Heart right ventricle (tissue), 16 donors: ENCODE measurements at regions of chr19 and their contacts with region 1.

Region 1: DNA sequence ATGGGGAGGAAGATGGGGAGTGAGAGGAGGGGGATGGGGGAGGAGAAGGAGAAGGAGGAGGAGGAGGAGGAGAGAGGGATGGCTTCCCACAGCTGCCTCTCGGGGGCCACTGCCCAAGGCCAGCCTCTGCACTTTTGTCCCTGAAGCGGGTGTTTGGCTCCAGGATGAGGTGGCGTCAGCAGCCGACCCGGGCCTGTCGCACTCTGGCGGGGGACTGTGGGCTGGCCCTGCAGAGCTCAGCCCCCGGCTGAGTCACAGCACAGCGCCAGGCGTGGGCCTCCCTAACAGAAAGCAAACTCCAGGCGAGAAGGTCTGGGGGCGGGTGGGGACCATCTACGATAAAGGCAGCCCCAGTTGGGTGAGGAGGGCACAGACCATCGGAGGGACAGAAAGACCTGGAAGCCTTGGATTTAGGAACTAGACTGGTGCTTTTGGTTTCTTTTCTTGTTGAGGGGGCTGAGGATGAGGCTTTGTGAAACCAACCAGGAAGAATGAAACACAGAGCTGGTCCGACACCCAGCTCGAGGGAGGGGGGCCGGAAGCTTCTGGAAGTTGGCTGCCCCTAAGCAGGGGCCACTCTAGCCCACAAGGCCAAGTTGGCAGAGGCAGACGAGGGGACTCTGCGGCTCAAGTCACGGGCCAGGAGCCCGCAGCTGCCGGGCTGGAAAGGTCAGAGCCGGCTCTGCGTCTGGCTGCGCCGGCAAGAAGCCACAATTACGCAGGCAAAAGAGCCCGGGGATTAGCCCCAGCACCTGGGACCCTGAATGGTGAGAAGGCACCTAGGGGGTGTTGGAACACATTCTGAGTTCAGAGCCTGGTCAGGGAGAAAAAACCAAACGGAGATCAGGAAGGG is 18.2 kb downstream of the LSM4 start:
- DNase-seq: peak; percentile 89
- ATAC-seq: peak; percentile 83 to 91 (median 87)
- H3K4me3 ChIP-seq: peak overlapping the region; percentile 6 to 59 (median 47)
- H3K27ac ChIP-seq: peak overlapping the region; percentile 90 to 100 (median 98)
- H3K4me1 ChIP-seq: peaks cover 24 to 74% (median 60%) of the 10 kb centered on the region in 9 donors
- H3K27me3 ChIP-seq: no peaks in the 10 kb centered on the region
- CTCF ChIP-seq: peak in 2 of 9 donors; percentile 26 to 28

Region 2: GRCh38 chr19:18233224-18233825 is 71.4 kb before region 1 on chr19:
- intact Hi-C with region 1: no loop called
- DNase-seq: peak in 1 of 2 donors; percentile 50
- ATAC-seq: peak in 6 of 8 donors; percentile 29 to 60 (median 48)
- H3K4me3 ChIP-seq: no peak overlapping the region
- H3K27ac ChIP-seq: no peak overlapping the region
- H3K4me1 ChIP-seq: peaks cover 0 to 17% (median 5%) of the 10 kb centered on the region in 9 donors
- H3K27me3 ChIP-seq: peaks cover 4 to 67% (median 64%) of the 10 kb centered on the region in 7 donors
- CTCF ChIP-seq: no peak

Region 3: GRCh38 chr19:18291590-18292461 is 12.9 kb before region 1 on chr19:
- intact Hi-C with region 1: loop called in 1 of 10 experiments (anchors 1 kb)
- DNase-seq: peak; percentile 87 to 93
- ATAC-seq: peak; percentile 80 to 86 (median 84)
- H3K4me3 ChIP-seq: peak overlapping the region; percentile 62 to 89 (median 76)
- H3K27ac ChIP-seq: peak overlapping the region; percentile 94 to 100 (median 99)
- H3K4me1 ChIP-seq: peaks cover 3 to 48% (median 26%) of the 10 kb centered on the region in 9 donors
- H3K27me3 ChIP-seq: no peaks in the 10 kb centered on the region
- CTCF ChIP-seq: no peak

Region 4: GRCh38 chr19:18322759-18323460 is 18.2 kb after region 1 on chr19 and contains the start of gene LSM4:
- intact Hi-C with region 1: loop called in 4 of 10 experiments (anchors 2 kb)
- DNase-seq: peak; percentile 98
- ATAC-seq: peak; percentile 96 to 98 (median 97)
- H3K4me3 ChIP-seq: peak within 1 kb of the TSS; percentile 58 to 92 (median 78)
- H3K27ac ChIP-seq: peak within 1 kb of the TSS; percentile 63 to 98 (median 92)
- H3K4me1 ChIP-seq: peaks cover 0 to 62% (median 57%) of the 10 kb centered on the region in 9 donors
- H3K27me3 ChIP-seq: no peaks in the 10 kb centered on the region
- CTCF ChIP-seq: peak in 4 of 9 donors; percentile 12 to 42 (median 28)
- total RNA-seq, gene LSM4: 73.2 to 114 (median 93.3) TPM

Region 5: DNA sequence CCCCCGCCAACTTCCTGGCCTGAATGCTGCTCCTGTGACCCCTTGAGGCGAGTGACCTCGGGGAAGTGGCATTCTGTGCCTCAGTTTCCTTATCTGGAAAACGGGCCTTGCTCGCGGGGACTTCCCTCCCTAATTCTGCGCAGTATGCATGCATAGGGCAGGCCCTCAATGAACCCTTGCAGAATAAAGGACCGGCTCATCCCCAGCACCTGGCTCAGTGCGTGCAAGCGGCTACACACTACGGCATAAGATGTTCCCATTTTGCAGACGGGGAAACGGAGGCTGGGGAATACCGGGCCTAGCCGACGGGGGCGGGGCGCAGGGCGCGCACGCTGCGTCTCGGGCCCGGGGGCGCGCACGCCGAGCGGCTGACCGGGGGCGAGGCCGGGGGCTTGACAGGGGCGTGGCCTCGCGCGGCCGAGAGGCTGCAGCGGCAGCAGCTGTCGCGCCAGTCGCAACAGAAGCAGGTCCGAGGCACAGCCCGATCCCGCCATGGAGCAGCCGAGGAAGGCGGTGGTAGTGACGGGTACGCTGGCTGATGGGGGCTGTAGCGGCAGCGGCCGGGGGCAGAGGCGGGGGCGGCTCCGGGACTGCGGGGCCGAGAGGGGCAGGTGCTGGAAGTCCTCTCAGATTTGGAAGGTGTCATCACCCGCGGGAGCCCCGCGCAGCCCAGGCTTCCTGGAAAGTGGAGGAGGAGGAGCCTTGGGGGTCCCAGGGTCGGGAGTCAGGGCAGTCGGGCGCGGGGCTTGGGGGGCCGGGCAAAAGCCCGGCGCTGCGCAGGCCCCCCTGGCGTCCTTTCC is 35.7 kb after region 1 on chr19 and contains the start of gene PGPEP1:
- intact Hi-C with region 1: no loop called
- DNase-seq: peak; percentile 82
- ATAC-seq: peak; percentile 77 to 90 (median 86)
- H3K4me3 ChIP-seq: peak within 1 kb of the TSS; percentile 63 to 97 (median 90)
- H3K27ac ChIP-seq: peak within 1 kb of the TSS; percentile 32 to 91 (median 85)
- H3K4me1 ChIP-seq: peaks cover 10 to 37% (median 21%) of the 10 kb centered on the region in 9 donors
- H3K27me3 ChIP-seq: no peaks in the 10 kb centered on the region
- CTCF ChIP-seq: no peak
- total RNA-seq, gene PGPEP1: 36.0 to 61.3 (median 46.8) TPM